ENCODE measurements at regions of chr20 and their contacts with region 1.

Region 1: DNA sequence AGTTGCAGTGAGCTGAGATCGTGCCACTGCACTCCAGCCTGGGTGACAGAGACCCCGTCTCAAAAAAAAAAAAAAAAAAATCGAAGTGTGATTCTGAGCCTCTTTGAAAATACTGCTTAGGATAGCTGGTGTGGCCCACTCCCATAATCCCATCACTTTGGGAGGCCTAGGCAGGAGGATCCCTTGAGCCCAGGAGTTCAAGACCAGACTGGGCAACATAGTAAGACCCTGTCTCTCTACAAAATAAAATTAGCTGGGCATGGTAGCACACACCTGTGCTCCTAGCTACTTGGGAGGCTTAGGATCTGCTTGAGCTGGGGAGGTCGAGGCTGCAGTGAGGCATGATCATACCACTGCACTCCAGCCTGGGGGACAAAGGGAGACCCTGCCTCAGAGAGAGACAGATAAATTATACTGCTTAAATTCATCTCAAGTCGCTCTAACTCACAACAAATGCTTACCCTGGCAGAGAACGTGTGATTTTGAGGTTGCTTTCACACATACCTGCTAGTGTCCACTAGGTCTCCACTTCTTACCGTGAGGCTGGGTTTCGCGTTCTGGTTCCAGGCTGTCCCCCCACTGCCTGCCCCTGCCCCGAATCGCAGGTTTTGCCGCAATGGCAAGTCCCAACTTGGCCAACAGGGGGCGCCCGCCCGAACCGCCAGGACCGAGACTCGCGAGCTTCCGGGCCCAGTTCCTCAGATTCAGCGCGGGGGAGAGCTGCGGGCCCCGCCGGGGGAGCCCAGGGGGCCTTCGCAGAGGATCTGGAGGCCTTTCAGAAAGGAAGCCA is 12.3 kb upstream of the TMC2 start:
- DNase-seq: peak; percentile 52
- ATAC-seq: peak; percentile 77
- H3K4me3 ChIP-seq: peak overlapping the region; percentile 60 to 70
- H3K27ac ChIP-seq: peak overlapping the region; percentile 52
- H3K4me1 ChIP-seq: peaks cover 3 to 23% of the 10 kb centered on the region in 2 experiments
- H3K27me3 ChIP-seq: no peaks in the 10 kb centered on the region
- CTCF ChIP-seq: peak; percentile 60 to 98 (median 93)
- POLR2A ChIP-seq: peak; percentile 57
- RAD21 ChIP-seq: peak; percentile 47; the same call in 1 of the 2 replicates

Region 2: GRCh38 chr20:2508631-2509467 is 15.3 kb before region 1 on chr20 and contains the start of gene ZNF343:
- CTCF ChIA-PET with region 1: interaction called, 28 read pairs
- POLR2A ChIA-PET with region 1: interaction called, 3 read pairs
- RAD21 ChIA-PET with region 1: no interaction called
- intact Hi-C with region 1: no loop called
- DNase-seq: peak; percentile 63
- ATAC-seq: peak; percentile 92
- H3K4me3 ChIP-seq: peak within 1 kb of the TSS; percentile 89 to 94
- H3K27ac ChIP-seq: peak within 1 kb of the TSS; percentile 59
- H3K4me1 ChIP-seq: peaks cover 5 to 16% of the 10 kb centered on the region in 2 experiments; a peak in 3 of 4 replicates
- H3K27me3 ChIP-seq: no peaks in the 10 kb centered on the region
- CTCF ChIP-seq: no peak; a peak in 1 of 6 replicates
- POLR2A ChIP-seq: peak; percentile 90
- RAD21 ChIP-seq: no peak
- total RNA-seq, gene ZNF343: 12.0 TPM

Region 3: DNA sequence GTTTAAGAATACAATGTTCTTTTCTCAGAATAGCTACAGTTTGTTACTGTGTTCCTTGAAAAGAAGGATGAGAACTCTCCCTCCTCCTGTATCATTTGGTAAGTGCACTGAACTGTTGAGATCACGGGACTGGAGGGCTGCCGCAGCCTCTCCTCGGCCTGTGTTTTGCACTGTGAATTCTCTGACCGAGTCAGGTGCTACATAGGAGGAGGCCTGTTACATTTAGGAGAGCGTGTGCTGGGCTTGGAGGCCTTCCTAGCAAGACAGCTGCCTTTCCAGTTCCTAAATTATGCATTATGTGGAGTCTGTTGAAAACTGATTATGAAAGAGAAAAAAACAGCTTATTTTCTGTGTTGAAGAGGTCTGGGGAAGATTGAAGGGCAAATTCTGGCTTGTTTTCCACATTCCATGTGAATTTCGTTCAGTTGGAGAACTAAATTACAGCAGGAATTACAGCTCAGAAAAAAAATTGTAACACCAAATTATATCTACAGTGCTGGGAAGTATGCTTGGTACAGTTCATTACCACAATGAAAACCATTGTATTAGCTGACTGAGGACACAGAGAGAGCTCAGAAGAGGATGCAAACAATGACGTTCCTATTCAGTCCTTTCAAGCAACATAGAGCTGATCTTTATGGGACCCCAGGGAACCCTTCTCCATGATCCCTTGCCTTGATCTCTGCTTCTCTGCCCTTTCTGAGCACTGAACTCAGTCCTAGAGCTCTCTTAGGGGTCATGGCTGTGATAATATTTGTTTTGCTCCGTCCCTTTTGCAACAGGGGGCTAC is 15.0 kb after region 1 on chr20:
- CTCF ChIA-PET with region 1: interaction called, 22 read pairs
- POLR2A ChIA-PET with region 1: no interaction called
- RAD21 ChIA-PET with region 1: no interaction called
- intact Hi-C with region 1: no loop called
- DNase-seq: no peak
- ATAC-seq: no peak
- H3K4me3 ChIP-seq: no peak overlapping the region
- H3K27ac ChIP-seq: no peak overlapping the region
- H3K4me1 ChIP-seq: no peaks in the 10 kb centered on the region
- H3K27me3 ChIP-seq: peaks cover 15% of the 10 kb centered on the region; the same call in 1 of the 2 replicates
- CTCF ChIP-seq: no peak
- POLR2A ChIP-seq: no peak
- RAD21 ChIP-seq: no peak

Measured in HCT116 (cell line).